ENCODE measurements at regions of chr1 and their contacts with region 1.

Region 1: GRCh38 chr1:100351095-100351891 is 1.0 kb upstream of the CDC14A start:
- DNase-seq: peak; percentile 85 to 86
- ATAC-seq: peak; percentile 66 to 76 (median 68)
- H3K4me3 ChIP-seq: peak overlapping the region; percentile 95
- H3K27ac ChIP-seq: peak overlapping the region; percentile 94
- H3K4me1 ChIP-seq: peaks cover 18% of the 10 kb centered on the region
- H3K27me3 ChIP-seq: no peaks in the 10 kb centered on the region
- CTCF ChIP-seq: peak; percentile 22

Region 2: GRCh38 chr1:100132566-100133477 is 218.5 kb before region 1 on chr1 and contains the starts of genes SASS6 and TRMT13:
- intact Hi-C with region 1: loop called in 1 of 2 experiments (anchors 5 kb)
- DNase-seq: peak; percentile 97 to 98
- ATAC-seq: peak; percentile 98 to 100 (median 99)
- H3K4me3 ChIP-seq: peak within 1 kb of the TSS; percentile 92
- H3K27ac ChIP-seq: peak within 1 kb of the TSS; percentile 87
- H3K4me1 ChIP-seq: peaks cover 30% of the 10 kb centered on the region
- H3K27me3 ChIP-seq: no peaks in the 10 kb centered on the region
- CTCF ChIP-seq: no peak
- total RNA-seq, gene SASS6: 1.1 to 1.5 (median 1.3) TPM
- total RNA-seq, gene TRMT13: 4.9 to 12.4 (median 8.6) TPM

Region 3: DNA sequence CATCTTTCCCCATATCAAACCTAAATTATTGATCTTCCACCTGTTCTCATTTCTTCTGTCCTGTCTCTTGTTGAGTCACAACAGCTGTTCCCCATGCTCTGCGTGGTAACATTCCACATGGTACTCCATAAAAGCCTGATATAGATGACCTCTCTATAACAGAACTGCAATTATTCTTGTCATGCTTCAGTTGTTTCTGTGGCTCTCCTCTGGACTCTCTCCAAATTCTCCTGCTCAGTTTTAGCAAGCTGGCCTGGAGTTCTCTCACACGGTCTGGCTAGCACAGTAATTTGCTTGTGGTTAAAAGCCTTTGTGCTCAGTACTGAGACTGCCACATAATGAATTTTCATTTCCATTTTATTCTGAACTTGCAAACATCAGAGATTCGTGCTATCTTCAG is 162.7 kb before region 1 on chr1:
- intact Hi-C with region 1: loop called in 1 of 2 experiments (anchors 5 kb)
- DNase-seq: no peak
- ATAC-seq: peak; percentile 92 to 95 (median 94)
- H3K4me3 ChIP-seq: peak overlapping the region; percentile 51
- H3K27ac ChIP-seq: peak overlapping the region; percentile 98
- H3K4me1 ChIP-seq: peaks cover 25% of the 10 kb centered on the region
- H3K27me3 ChIP-seq: no peaks in the 10 kb centered on the region
- CTCF ChIP-seq: no peak

Region 4: DNA sequence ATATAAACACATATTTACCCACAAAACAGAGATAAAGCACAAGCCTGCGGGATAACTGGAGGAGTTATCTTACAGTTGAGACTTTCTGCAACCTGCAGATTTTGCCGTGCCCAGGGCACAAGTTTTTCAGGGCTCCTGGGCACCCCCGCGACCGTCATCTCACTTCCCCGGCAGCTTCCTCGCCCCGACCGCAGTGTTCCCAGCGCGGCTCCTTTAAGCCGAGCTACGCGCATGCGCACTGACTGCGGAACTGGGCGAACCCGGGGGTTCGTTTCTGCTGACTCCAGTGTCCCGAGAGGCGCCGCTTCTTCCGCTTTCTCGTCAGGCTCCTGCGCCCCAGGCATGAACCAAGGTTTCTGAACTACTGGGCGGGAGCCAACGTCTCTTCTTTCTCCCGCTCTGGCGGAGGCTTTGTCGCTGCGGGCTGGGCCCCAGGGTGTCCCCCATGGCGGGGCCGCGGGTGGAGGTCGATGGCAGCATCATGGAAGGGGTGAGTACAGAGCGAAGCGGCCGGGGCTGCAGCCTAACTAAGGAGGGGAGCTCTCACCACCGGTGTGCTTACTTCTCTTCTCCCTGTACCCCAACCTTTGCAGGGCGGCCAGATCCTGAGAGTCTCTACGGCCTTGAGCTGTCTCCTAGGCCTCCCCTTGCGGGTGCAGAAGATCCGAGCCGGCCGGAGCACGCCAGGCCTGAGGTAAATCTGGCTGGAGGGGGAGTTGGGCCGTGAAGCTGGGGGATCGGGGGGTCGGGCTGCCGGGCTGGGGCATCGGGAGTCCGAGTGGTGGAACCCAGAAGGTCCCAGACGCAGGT is 85.2 kb before region 1 on chr1 and contains the start of gene RTCA:
- intact Hi-C with region 1: loop called in 1 of 2 experiments (anchors 2 kb)
- DNase-seq: peak; percentile 98 to 99
- ATAC-seq: peak; percentile 99 to 100 (median 99)
- H3K4me3 ChIP-seq: peak within 1 kb of the TSS; percentile 97
- H3K27ac ChIP-seq: peak within 1 kb of the TSS; percentile 87
- H3K4me1 ChIP-seq: peaks cover 11% of the 10 kb centered on the region
- H3K27me3 ChIP-seq: no peaks in the 10 kb centered on the region
- CTCF ChIP-seq: no peak
- total RNA-seq, gene RTCA: 24.0 to 33.4 (median 33.0) TPM

Region 5: DNA sequence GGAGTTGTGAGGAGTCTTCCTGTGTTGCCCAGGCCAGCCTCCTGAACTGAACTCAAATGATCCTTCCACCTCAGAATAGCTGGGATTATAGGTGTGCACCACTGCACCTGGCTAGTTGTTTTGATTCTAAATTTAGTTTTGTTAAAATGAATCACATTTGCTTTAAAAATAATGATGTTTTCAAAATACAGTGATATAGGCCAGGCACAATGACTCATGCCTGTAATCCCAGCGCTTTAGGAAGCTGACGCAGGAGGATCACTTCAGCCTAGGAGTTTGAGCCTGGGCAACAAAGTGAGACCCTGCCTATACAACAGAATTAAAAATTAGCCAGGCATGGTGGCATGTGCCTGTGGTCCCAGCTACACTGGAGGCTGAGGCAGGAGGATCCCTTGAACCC is 61.0 kb before region 1 on chr1:
- intact Hi-C with region 1: loop called in 1 of 2 experiments (anchors 2 kb)
- DNase-seq: no peak
- ATAC-seq: no peak
- H3K4me3 ChIP-seq: no peak overlapping the region
- H3K27ac ChIP-seq: no peak overlapping the region
- H3K4me1 ChIP-seq: no peaks in the 10 kb centered on the region
- H3K27me3 ChIP-seq: no peaks in the 10 kb centered on the region
- CTCF ChIP-seq: no peak

Region 6: GRCh38 chr1:100443811-100444571 is 92.7 kb after region 1 on chr1:
- intact Hi-C with region 1: loop called in 1 of 2 experiments (anchors 5 kb)
- DNase-seq: no peak
- ATAC-seq: peak; percentile 44 to 74 (median 64)
- H3K4me3 ChIP-seq: peak overlapping the region; percentile 19
- H3K27ac ChIP-seq: peak overlapping the region; percentile 63
- H3K4me1 ChIP-seq: peaks cover 31% of the 10 kb centered on the region
- H3K27me3 ChIP-seq: no peaks in the 10 kb centered on the region
- CTCF ChIP-seq: no peak

Region 7: GRCh38 chr1:100459358-100460114 is 108.2 kb after region 1 on chr1:
- intact Hi-C with region 1: loop called in 1 of 2 experiments (anchors 2 kb)
- DNase-seq: peak; percentile 68 to 82
- ATAC-seq: peak; percentile 90 to 98 (median 94)
- H3K4me3 ChIP-seq: no peak overlapping the region
- H3K27ac ChIP-seq: peak overlapping the region; percentile 33
- H3K4me1 ChIP-seq: peaks cover 3% of the 10 kb centered on the region
- H3K27me3 ChIP-seq: no peaks in the 10 kb centered on the region
- CTCF ChIP-seq: peak; percentile 90

Measured in psoas muscle (tissue), 8 donors.